Heart right ventricle (tissue), 16 donors: ENCODE measurements at regions of chr14 and their contacts with region 1.

Region 1: GRCh38 chr14:61025251-61026223 is 44.5 kb downstream of the SLC38A6 start:
- DNase-seq: peak; percentile 14 to 59
- ATAC-seq: peak in 2 of 8 donors; percentile 33 to 51
- H3K4me3 ChIP-seq: no peak overlapping the region
- H3K27ac ChIP-seq: no peak overlapping the region
- H3K4me1 ChIP-seq: no peaks in the 10 kb centered on the region
- H3K27me3 ChIP-seq: no peaks in the 10 kb centered on the region
- CTCF ChIP-seq: peak; percentile 77 to 97 (median 92)

Region 2: DNA sequence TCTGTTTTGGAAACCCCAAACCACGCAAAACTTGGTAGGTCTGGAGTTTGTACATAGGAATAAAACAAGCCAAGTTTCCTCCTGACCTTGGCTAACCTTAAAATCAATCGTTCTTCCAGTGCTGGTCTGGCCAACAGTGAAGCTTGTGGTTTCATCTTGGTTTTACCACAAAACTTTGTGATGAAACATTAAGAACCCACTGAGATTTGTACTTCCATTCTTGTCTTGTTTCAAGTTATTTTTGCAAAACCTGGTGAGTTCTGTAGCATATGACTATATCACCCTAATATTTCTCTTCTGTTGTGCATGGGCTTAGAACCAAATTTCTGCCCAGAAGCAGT is 402.6 kb before region 1 on chr14:
- intact Hi-C with region 1: loop called (anchors 1 to 5 kb)
- DNase-seq: no peak
- ATAC-seq: no peak
- H3K4me3 ChIP-seq: no peak overlapping the region
- H3K27ac ChIP-seq: no peak overlapping the region
- H3K4me1 ChIP-seq: no peaks in the 10 kb centered on the region
- H3K27me3 ChIP-seq: peaks cover 0 to 45% (median 15%) of the 10 kb centered on the region in 7 donors
- CTCF ChIP-seq: no peak

Region 3: DNA sequence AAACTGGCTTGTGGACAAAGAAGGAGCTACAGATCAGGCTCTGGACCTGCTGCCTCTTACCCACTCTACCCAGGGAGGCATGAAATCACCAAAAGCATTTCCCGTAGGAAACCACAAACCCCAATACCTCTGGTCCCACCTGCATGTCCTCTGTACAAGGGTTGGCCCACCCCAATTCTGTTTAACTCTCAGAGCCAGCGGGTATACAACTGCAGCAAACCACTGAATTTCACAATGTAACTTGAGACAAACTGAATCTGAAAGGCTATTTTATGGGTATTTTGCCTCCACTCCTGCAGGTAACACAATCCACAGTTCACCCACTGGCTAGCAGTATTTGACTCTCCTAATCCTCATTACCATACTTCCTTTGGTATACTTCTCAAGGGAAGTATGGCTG is 392.8 kb before region 1 on chr14:
- intact Hi-C with region 1: loop called in 4 of 10 experiments (anchors 2 to 5 kb)
- DNase-seq: no peak
- ATAC-seq: no peak
- H3K4me3 ChIP-seq: no peak overlapping the region
- H3K27ac ChIP-seq: no peak overlapping the region
- H3K4me1 ChIP-seq: peaks cover 0 to 8% (median 6%) of the 10 kb centered on the region in 9 donors
- H3K27me3 ChIP-seq: peaks cover 0 to 86% (median 43%) of the 10 kb centered on the region in 7 donors
- CTCF ChIP-seq: no peak

Region 4: GRCh38 chr14:60656686-60657455 is 368.7 kb before region 1 on chr14:
- intact Hi-C with region 1: loop called in 1 of 10 experiments (anchors 10 kb)
- DNase-seq: peak; percentile 21 to 48
- ATAC-seq: peak; percentile 60 to 88 (median 78)
- H3K4me3 ChIP-seq: peak overlapping the region; percentile 45 to 71 (median 65)
- H3K27ac ChIP-seq: peak overlapping the region in 1 of 10 donors; percentile 29
- H3K4me1 ChIP-seq: peaks cover 0 to 45% (median 36%) of the 10 kb centered on the region in 9 donors
- H3K27me3 ChIP-seq: peaks cover 26 to 100% (median 100%) of the 10 kb centered on the region in 7 donors
- CTCF ChIP-seq: peak in 8 of 9 donors; percentile 17 to 66 (median 46)

Region 5: GRCh38 chr14:60724137-60724619 is 301.4 kb before region 1 on chr14 and contains the start of gene SIX4:
- intact Hi-C with region 1: loop called in 2 of 10 experiments (anchors 10 kb)
- DNase-seq: peak; percentile 41 to 57
- ATAC-seq: peak; percentile 60 to 93 (median 88)
- H3K4me3 ChIP-seq: peak within 1 kb of the TSS; percentile 59 to 80 (median 74)
- H3K27ac ChIP-seq: peak within 1 kb of the TSS in 3 of 10 donors; percentile 21 to 58 (median 54)
- H3K4me1 ChIP-seq: peaks cover 0 to 34% (median 19%) of the 10 kb centered on the region in 9 donors
- H3K27me3 ChIP-seq: peaks cover 0 to 98% (median 67%) of the 10 kb centered on the region in 7 donors
- CTCF ChIP-seq: no peak
- total RNA-seq, gene SIX4: 0.59 to 1.5 (median 0.82) TPM

Region 6: GRCh38 chr14:61145034-61145902 is 119.7 kb after region 1 on chr14:
- intact Hi-C with region 1: no loop called
- DNase-seq: peak in 1 of 2 donors; percentile 17
- ATAC-seq: peak; percentile 26 to 67 (median 62)
- H3K4me3 ChIP-seq: no peak overlapping the region
- H3K27ac ChIP-seq: peak overlapping the region in 8 of 10 donors; percentile 35 to 78 (median 58)
- H3K4me1 ChIP-seq: peaks cover 0 to 28% (median 5%) of the 10 kb centered on the region in 9 donors
- H3K27me3 ChIP-seq: no peaks in the 10 kb centered on the region
- CTCF ChIP-seq: no peak

Region 7: DNA sequence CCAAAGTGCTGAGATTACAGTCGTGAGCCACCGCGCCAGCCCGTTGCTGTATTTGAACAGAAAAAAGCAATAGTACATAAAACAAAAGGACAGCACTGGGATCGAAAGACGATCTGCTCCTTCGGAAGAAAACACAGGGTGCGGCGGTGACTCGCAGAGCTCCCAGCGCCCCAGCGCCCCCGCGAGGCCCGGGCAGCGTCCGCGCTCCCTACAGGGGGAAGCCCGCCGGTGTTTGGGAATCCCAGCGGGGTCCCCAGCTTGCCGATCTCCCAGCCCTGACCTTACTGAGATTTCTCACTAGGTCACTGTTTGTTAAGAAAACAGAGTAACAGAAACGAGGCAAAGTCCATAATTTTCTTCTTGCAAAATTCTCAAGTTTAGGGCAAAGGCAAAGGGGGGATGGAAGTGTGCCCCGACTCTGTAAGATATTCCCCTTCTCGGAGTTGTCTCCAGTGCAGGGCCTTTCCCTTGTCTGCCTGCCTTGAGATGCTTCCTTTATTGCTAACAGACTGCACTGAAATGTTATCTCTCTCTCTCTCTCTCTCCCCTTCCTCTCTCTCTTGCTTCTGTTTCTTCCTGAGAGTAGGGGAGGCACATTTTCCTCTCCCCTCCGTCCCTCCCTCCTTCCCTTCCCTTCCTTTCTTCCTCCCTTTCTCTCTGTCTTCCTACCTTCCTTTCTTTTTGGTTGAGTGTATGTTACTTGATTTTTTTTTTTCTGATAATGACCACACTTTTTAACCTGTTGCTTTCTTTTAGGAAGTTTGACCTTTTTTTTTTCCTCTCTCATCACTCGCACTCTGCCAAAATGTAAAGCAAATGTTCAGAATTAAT is 163.7 kb after region 1 on chr14:
- intact Hi-C with region 1: loop called in 1 of 10 experiments (anchors 5 kb)
- DNase-seq: peak; percentile 34 to 57
- ATAC-seq: peak; percentile 80 to 90 (median 84)
- H3K4me3 ChIP-seq: peak overlapping the region in 9 of 10 donors; percentile 22 to 55 (median 48)
- H3K27ac ChIP-seq: peak overlapping the region in 9 of 10 donors; percentile 8 to 78 (median 52)
- H3K4me1 ChIP-seq: peaks cover 0 to 23% (median 0%) of the 10 kb centered on the region in 9 donors
- H3K27me3 ChIP-seq: peaks cover 0 to 68% (median 23%) of the 10 kb centered on the region in 7 donors
- CTCF ChIP-seq: peak in 8 of 9 donors; percentile 17 to 65 (median 53)

Region 8: DNA sequence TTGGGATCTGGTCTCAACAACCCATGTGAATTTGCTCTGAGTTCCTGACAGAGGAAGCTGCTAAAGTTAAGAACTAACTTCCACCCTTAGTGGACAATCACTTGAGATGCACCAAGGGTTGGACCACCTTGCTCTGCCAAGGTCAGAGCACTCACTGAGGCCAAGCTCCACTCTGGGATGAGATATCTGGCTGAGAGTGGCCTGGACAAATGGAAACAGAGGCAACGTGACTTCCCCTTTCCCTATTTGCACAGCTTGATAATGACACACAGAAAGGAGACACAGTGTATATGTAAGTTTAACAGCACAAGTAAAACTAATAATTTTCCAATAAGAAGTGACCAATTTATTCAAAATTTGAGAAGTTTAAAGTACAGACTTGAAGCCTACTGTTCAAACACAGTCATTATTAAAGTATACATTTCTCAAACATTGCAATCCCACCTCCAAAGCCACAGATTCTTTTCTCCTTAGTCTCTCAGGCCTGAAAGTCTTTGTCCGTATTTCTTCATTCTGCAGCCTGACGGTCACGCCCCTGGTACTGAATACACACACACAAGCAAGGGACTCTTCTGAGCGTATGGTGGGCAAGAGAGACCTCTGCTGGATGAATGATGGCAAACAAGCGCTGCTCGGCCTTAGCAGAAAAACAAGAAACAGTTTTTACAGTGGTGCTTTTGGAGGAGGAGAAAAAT is 227.0 kb after region 1 on chr14:
- intact Hi-C with region 1: loop called in 6 of 10 experiments (anchors 2 to 10 kb)
- DNase-seq: peak; percentile 18 to 73
- ATAC-seq: peak in 7 of 8 donors; percentile 86 to 96 (median 95)
- H3K4me3 ChIP-seq: no peak overlapping the region
- H3K27ac ChIP-seq: no peak overlapping the region
- H3K4me1 ChIP-seq: peaks cover 0 to 10% (median 3%) of the 10 kb centered on the region in 9 donors
- H3K27me3 ChIP-seq: no peaks in the 10 kb centered on the region
- CTCF ChIP-seq: peak; percentile 50 to 90 (median 84)